K562 (cell line): ENCODE measurements at regions of chr10 and their contacts with region 1.

Region 1: DNA sequence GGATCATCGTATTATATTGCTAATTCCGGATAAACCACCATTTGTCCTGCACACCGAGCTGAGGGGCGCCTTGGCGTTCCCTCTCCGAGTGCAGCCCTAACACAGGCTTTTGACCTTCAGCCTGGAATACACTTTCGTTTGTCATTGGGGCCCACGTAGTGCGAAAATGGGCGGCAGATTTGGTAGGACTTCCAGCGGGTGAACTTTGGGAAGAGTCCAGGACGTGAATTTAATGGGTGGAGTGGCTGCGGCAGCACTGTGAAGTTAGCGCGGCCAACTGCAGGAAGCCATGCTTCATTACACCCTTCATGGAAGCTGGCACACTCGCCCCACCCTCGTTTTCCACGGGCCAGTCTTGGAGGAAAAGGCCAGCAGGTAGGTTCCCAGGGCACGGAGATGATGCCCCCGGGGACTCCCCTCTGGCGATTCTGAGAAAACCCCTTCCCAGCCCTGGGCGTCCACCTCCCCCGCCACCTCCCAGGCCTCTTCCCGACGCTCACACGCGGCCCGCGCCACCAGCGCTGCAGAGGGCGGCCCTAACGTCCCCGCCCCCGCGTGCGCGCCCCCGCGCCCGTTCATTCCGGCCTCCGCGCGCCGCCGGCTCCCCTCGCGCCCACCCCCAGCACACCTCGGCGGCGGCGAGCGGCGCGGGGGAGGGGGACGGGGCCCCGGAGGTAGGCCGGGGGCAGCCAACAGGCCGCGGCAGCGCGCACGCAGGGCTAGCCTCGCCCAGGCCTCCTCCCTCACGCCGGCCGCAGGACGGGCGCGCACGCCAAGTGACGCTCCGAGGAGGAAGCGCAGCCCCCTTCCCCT is at the start of gene MLLT10:
- DNase-seq: peak; percentile 88 to 97 (median 90)
- ATAC-seq: peak; percentile 74
- H3K4me3 ChIP-seq: peak within 1 kb of the TSS; percentile 60
- H3K27ac ChIP-seq: peak within 1 kb of the TSS; percentile 96
- H3K4me1 ChIP-seq: peaks cover 8 to 11% of the 10 kb centered on the region in 2 experiments; a peak in 4 of 5 replicates
- H3K27me3 ChIP-seq: no peaks in the 10 kb centered on the region
- CTCF ChIP-seq: 0 out of 6 replicates have a peak, but pooled peaks of 2 of the 3 experiments have one; percentile 7 to 19
- EP300 ChIP-seq: no peak
- POLR2A ChIP-seq: peak; percentile 89
- RAD21 ChIP-seq: no peak
- polyA plus RNA-seq, gene MLLT10: 18.8 to 25.8 TPM

Region 2: GRCh38 chr10:21552638-21553037 is 19.0 kb after region 1 on chr10:
- CTCF ChIA-PET with region 1: no interaction called
- POLR2A ChIA-PET with region 1: interaction called, 10 read pairs
- in situ Hi-C with region 1: no loop called
- intact Hi-C with region 1: no loop called
- DNase-seq: no peak
- ATAC-seq: no peak
- H3K4me3 ChIP-seq: no peak overlapping the region
- H3K27ac ChIP-seq: no peak overlapping the region
- H3K4me1 ChIP-seq: peaks cover 3 to 13% of the 10 kb centered on the region in 2 experiments; a peak in 2 of 5 replicates
- H3K27me3 ChIP-seq: no peaks in the 10 kb centered on the region
- CTCF ChIP-seq: no peak
- EP300 ChIP-seq: no peak
- POLR2A ChIP-seq: no peak
- RAD21 ChIP-seq: no peak

Region 3: DNA sequence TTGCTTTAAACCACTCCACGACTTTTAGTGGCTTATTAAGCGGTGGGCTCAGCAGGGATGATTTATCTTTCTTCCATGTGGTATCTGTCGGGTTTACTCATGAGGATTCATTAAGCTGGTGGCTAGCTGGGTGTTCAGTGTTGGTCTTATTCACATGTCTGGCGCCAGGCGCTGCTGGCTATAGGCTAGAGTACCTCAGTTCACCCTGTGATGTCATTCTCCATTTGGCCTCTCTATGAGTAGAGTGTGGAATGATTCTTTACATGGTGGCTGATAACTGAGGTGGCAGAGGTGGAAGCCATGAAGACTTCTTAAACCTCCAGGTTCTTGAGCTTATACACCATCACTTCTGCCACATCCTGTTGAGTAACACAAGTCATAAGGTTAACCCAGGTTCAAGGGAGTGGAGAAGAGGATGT is 115.8 kb after region 1 on chr10:
- CTCF ChIA-PET with region 1: no interaction called
- POLR2A ChIA-PET with region 1: no interaction called
- in situ Hi-C with region 1: no loop called
- intact Hi-C with region 1: no loop called
- DNase-seq: no peak
- ATAC-seq: no peak
- H3K4me3 ChIP-seq: no peak overlapping the region
- H3K27ac ChIP-seq: no peak overlapping the region; the same call in 2 of the 3 replicates
- H3K4me1 ChIP-seq: no peaks in the 10 kb centered on the region
- H3K27me3 ChIP-seq: no peaks in the 10 kb centered on the region
- CTCF ChIP-seq: no peak
- EP300 ChIP-seq: no peak
- POLR2A ChIP-seq: no peak
- RAD21 ChIP-seq: no peak